BJ (cell line): ENCODE measurements at regions of chr10 and their contacts with region 1.

Region 1: GRCh38 chr10:70146489-70147258 is at the start of gene TYSND1:
- DNase-seq: peak; percentile 89
- H3K4me3 ChIP-seq: peak within 1 kb of the TSS; percentile 51
- H3K27me3 ChIP-seq: no peaks in the 10 kb centered on the region
- CTCF ChIP-seq: peak; percentile 90
- polyA plus RNA-seq, gene TYSND1: 2.7 and 5.3 TPM in 2 replicates

Region 2: DNA sequence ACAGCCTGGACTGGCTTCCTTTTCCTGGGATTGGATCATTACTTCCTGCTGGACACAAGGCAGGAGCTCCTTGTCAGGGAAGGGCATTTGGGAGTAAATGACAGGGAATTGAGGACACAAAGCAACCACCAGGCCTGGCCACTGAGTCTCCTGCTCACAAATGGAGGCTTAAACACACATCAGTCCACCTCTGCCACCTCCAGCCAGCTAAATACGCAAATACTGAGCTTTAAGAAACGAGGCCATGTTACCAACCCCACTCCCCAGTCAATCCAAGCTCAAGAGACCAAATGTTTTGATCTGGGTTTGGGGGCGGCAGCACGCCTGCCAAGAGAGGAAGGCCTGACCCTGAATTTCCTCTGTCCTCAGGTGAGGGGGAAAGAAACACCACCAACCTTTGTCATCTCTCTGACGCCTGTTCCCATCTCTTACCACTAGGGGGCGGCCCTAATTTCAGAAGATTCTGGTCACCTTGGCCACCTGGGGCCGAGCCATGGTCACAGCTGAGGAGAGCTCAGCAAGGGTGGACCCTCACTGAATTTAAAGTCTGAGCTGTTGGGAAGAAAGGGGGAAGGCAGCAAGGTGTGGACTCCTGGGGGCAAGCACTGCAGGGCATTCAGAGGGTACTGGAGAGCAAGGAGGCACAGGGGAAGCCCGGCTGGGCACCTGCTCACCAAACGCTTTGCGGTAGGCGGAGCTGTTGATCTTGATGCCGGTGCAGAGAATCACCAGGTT is 30.6 kb before region 1 on chr10:
- CTCF ChIA-PET with region 1: interaction called, 46 read pairs
- POLR2A ChIA-PET with region 1: no interaction called
- DNase-seq: no peak
- H3K4me3 ChIP-seq: no peak overlapping the region
- H3K27me3 ChIP-seq: no peaks in the 10 kb centered on the region
- CTCF ChIP-seq: peak; percentile 91

Region 3: GRCh38 chr10:70123817-70124216 is 22.9 kb before region 1 on chr10:
- CTCF ChIA-PET with region 1: interaction called, 46 read pairs
- POLR2A ChIA-PET with region 1: no interaction called
- DNase-seq: no peak
- H3K4me3 ChIP-seq: no peak overlapping the region
- H3K27me3 ChIP-seq: no peaks in the 10 kb centered on the region
- CTCF ChIP-seq: no peak

Region 4: GRCh38 chr10:70132098-70133029 is 14.3 kb before region 1 on chr10 and contains the start of gene AIFM2:
- CTCF ChIA-PET with region 1: interaction called, 41 read pairs
- POLR2A ChIA-PET with region 1: no interaction called
- DNase-seq: no peak
- H3K4me3 ChIP-seq: peak within 1 kb of the TSS; percentile 71
- H3K27me3 ChIP-seq: no peaks in the 10 kb centered on the region
- CTCF ChIP-seq: 0 out of 2 replicates have a peak, but pooled peaks have one; percentile 7
- polyA plus RNA-seq, gene AIFM2: 13.9 and 18.4 TPM in 2 replicates

Region 5: DNA sequence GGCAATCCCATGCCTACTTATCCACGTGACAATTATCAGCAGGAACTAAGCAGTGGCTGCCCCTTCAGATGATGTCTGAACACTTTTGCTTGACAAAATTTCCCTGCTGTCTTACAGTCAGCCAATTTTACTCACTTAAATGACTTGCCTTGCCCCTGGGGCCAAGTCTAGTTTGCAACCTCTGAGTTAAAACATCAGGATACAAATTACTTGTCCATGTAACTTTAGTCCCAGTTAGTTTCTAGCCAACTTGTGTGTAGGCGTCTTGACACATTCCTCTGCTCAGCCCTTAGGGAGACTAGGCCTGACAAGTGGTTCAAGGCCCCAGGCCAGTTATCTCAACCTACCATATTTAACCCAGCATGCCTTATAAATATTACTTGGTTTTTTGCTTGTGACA is 11.4 kb after region 1 on chr10:
- CTCF ChIA-PET with region 1: interaction called, 17 read pairs
- POLR2A ChIA-PET with region 1: interaction called, 4 read pairs
- DNase-seq: no peak
- H3K4me3 ChIP-seq: no peak overlapping the region
- H3K27me3 ChIP-seq: no peaks in the 10 kb centered on the region
- CTCF ChIP-seq: no peak

Region 6: GRCh38 chr10:70169649-70170364 is 23.1 kb after region 1 on chr10:
- CTCF ChIA-PET with region 1: interaction called, 26 read pairs
- POLR2A ChIA-PET with region 1: interaction called, 9 read pairs
- DNase-seq: no peak
- H3K4me3 ChIP-seq: peak overlapping the region; percentile 82
- H3K27me3 ChIP-seq: no peaks in the 10 kb centered on the region
- CTCF ChIP-seq: no peak

Region 7: GRCh38 chr10:70191972-70192305 is 45.3 kb after region 1 on chr10:
- CTCF ChIA-PET with region 1: interaction called, 32 read pairs
- POLR2A ChIA-PET with region 1: no interaction called
- DNase-seq: peak; percentile 94
- H3K4me3 ChIP-seq: no peak overlapping the region
- H3K27me3 ChIP-seq: no peaks in the 10 kb centered on the region
- CTCF ChIP-seq: no peak